ENCODE measurements at regions of chr5 and their contacts with region 1.

Region 1: GRCh38 chr5:45521067-45521466 is 175.1 kb downstream of the HCN1 start:
- DNase-seq: peak; percentile 2
- ATAC-seq: no peak
- H3K4me3 ChIP-seq: no peak overlapping the region
- H3K27ac ChIP-seq: no peak overlapping the region
- H3K4me1 ChIP-seq: no peaks in the 10 kb centered on the region
- H3K27me3 ChIP-seq: no peaks in the 10 kb centered on the region
- CTCF ChIP-seq: no peak
- EP300 ChIP-seq: no peak
- POLR2A ChIP-seq: no peak
- RAD21 ChIP-seq: no peak

Region 2: DNA sequence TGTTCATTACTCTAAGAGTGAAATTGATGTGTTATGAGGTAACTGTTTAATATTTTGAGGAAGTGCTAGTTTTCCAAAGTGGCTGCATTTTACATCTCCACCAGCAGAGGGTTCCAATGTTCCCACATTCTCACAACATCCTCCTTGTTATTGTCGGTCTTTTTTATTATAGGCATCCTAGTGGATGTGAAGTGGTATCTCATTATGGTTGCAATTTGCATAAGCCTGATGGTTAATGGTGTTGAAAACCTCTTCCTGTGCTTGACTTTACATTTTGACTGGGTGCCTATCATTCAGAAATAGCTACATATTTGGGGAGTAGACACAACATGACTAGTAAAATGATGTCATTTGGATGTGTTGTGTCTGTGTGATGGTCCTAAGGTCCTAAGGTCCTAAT is 568.7 kb before region 1 on chr5:
- CTCF ChIA-PET with region 1: no interaction called
- POLR2A ChIA-PET with region 1: no interaction called
- in situ Hi-C with region 1: no loop called
- intact Hi-C with region 1: loop called (anchors 1 kb)
- DNase-seq: peak; percentile 18
- ATAC-seq: peak; percentile 51; the same call in 2 of the 3 replicates
- H3K4me3 ChIP-seq: no peak overlapping the region
- H3K27ac ChIP-seq: no peak overlapping the region
- H3K4me1 ChIP-seq: no peaks in the 10 kb centered on the region
- H3K27me3 ChIP-seq: no peaks in the 10 kb centered on the region
- CTCF ChIP-seq: peak; percentile 31
- EP300 ChIP-seq: no peak
- POLR2A ChIP-seq: no peak
- RAD21 ChIP-seq: no peak

Region 3: GRCh38 chr5:45687701-45688100 is 166.6 kb after region 1 on chr5:
- CTCF ChIA-PET with region 1: no interaction called
- POLR2A ChIA-PET with region 1: no interaction called
- in situ Hi-C with region 1: no loop called
- intact Hi-C with region 1: no loop called
- DNase-seq: no peak
- ATAC-seq: no peak
- H3K4me3 ChIP-seq: no peak overlapping the region
- H3K27ac ChIP-seq: no peak overlapping the region
- H3K4me1 ChIP-seq: no peaks in the 10 kb centered on the region
- H3K27me3 ChIP-seq: no peaks in the 10 kb centered on the region
- CTCF ChIP-seq: no peak
- EP300 ChIP-seq: no peak
- POLR2A ChIP-seq: no peak
- RAD21 ChIP-seq: no peak

Measured in HepG2 (cell line).